Psoas muscle (tissue), 8 donors: ENCODE measurements at regions of chr1 and their contacts with region 1.

Region 1: DNA sequence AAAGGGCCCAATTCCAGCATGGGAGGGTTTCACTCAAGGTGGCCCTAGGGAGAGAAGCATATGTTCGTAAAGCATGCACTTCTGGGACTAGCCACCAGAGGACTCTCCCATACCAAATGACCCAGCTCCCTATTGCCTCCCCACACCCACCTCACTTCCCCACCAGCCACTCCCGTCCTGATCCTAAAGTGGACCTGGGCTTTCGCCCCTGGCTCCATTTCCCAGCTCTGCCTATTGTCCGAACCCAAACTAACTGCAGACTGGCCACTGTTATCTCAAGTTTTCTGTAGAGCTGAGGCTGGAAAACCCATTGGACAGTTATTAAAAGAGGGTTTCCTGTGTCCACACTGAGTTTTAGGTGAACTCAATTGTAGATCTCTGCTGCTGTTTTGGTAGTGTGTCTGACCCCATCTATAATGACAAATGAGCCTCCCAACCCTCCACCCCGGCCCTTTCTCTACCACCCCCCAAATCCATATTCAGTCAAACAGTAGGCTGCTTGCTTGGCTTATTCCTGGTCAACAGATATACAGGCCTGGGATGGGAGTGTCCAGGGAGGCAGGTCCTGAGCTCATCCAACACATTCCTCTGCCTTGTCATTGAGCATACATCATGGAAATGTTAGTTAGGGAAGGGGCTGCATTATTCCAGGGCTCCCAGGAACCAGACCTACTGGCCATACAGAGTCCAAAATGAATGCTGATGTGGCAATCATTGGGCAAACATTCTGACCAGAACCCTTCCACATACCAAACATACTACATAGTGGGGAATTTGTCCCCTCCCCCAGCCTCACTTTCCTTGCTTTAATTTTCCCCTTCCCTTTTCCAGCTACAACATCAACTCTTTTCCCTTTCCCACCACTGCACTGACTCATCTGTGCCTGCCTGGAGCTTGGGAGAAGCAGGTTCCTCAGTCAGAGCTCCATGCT is 59.2 kb downstream of the ABCA4 start:
- DNase-seq: peak; percentile 44 to 73
- ATAC-seq: peak; percentile 90 to 96 (median 92)
- H3K4me3 ChIP-seq: no peak overlapping the region
- H3K27ac ChIP-seq: no peak overlapping the region
- H3K4me1 ChIP-seq: peaks cover 8% of the 10 kb centered on the region
- H3K27me3 ChIP-seq: no peaks in the 10 kb centered on the region
- CTCF ChIP-seq: peak; percentile 88

Region 2: GRCh38 chr1:94130851-94131595 is 69.2 kb after region 1 on chr1:
- intact Hi-C with region 1: no loop called
- DNase-seq: no peak
- ATAC-seq: no peak
- H3K4me3 ChIP-seq: no peak overlapping the region
- H3K27ac ChIP-seq: no peak overlapping the region
- H3K4me1 ChIP-seq: no peaks in the 10 kb centered on the region
- H3K27me3 ChIP-seq: no peaks in the 10 kb centered on the region
- CTCF ChIP-seq: no peak

Region 3: DNA sequence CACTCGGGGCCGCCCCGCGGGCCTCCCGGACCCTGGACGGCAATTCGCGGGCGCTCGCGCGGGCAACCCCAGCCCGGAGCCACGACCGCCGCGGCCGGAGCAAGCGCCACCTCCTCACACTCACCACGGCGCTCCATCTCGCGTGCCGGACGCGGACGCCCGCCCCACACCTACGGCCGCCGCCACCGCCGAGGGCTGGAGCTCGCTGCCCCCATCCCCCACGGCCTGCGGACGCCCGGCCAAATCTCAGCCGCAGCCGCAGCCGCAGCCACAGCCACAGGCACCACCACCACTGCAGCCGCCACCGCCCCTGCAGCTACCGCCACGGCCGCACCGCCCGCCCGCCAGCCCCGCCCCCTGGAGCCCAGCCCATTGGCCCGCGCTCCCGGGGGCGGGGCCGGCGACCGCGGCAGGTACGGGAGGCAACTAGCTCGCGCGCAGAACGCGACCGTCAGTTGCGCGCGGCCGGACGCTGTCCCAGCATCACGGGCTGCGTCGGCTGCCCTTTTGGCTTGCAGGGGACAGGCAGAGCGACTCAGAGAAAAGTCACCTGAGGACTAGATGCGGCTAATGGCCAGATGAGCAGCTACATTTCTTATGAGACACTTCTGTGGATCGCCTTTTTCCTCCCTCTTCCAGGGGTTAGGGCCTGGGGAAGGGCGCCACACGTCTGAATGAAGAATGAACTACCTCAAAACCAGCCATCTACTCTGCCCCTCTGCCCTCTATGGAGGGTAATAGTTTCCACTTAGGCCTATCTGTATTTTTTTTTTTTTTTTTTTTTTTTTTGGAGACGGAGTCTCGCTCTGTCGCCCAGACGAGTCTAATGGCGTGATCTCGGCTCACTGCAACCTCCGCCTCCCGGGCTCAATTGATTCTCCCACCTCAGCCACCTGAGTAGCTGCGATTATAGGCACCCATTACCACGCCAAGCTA is 175.8 kb after region 1 on chr1 and contains the start of gene ARHGAP29:
- intact Hi-C with region 1: loop called (anchors 5 to 10 kb)
- DNase-seq: peak; percentile 82 to 92
- ATAC-seq: peak; percentile 93 to 96 (median 96)
- H3K4me3 ChIP-seq: peak within 1 kb of the TSS; percentile 84
- H3K27ac ChIP-seq: peak within 1 kb of the TSS; percentile 95
- H3K4me1 ChIP-seq: peaks cover 10% of the 10 kb centered on the region
- H3K27me3 ChIP-seq: no peaks in the 10 kb centered on the region
- CTCF ChIP-seq: peak; percentile 1
- total RNA-seq, gene ARHGAP29: 11.8 to 20.0 (median 15.7) TPM

Region 4: DNA sequence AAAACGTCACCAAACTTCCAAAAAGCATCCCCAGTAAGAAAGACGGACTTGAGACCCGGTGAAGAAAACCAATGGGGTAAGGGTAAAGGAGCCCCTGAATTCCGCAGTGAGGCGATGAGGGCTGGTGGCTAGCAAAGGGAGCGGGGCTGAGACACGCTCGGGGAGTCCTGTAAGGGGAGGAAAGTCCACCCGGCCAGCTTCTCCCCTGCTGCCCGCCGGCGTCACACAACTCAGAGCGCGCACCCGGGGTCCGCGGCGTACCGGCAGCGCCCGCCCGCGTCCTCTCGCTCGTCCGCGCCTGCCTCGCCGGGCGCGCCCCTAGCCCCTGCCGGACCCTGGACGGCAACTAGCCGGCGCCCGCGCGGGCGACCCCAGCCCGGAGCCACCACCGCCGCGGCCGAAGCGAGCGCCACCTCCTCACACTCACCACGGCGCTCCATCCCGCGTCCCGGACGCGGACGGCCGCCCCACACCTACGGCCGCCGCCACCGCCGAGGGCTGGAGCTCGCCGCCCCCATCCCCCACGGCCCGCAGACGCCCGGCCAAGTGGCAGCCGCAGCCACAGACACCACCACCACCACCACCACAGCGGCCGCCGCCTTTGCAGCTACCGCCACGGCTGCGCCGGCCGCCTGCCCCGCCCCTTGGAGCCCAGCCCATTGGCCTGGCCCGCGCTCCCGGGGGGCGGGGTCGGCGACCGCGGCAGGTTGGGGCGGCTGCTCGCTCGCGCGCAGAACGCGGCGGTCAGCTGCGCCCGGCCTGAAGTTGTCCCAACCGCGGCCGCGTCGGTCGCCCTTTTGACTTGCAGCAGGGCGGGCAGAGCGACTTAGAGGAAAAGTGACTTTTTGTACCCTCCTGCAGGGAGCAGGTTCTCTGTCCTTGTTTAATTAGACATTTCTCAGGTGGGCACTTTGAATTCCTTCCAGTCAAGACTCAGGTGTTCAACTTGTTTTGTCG is 185.6 kb after region 1 on chr1:
- intact Hi-C with region 1: loop called in 1 of 2 experiments (anchors 10 kb)
- DNase-seq: peak; percentile 83 to 91
- ATAC-seq: peak; percentile 96 to 98 (median 98)
- H3K4me3 ChIP-seq: peak overlapping the region; percentile 73
- H3K27ac ChIP-seq: peak overlapping the region; percentile 78
- H3K4me1 ChIP-seq: peaks cover 5% of the 10 kb centered on the region
- H3K27me3 ChIP-seq: no peaks in the 10 kb centered on the region
- CTCF ChIP-seq: no peak

Region 5: GRCh38 chr1:94335950-94336349 is 274.2 kb after region 1 on chr1:
- intact Hi-C with region 1: loop called (anchors 2 kb)
- DNase-seq: peak; percentile 52 to 61
- ATAC-seq: peak; percentile 89 to 99 (median 93)
- H3K4me3 ChIP-seq: no peak overlapping the region
- H3K27ac ChIP-seq: no peak overlapping the region
- H3K4me1 ChIP-seq: peaks cover 8% of the 10 kb centered on the region
- H3K27me3 ChIP-seq: no peaks in the 10 kb centered on the region
- CTCF ChIP-seq: peak; percentile 88

Region 6: DNA sequence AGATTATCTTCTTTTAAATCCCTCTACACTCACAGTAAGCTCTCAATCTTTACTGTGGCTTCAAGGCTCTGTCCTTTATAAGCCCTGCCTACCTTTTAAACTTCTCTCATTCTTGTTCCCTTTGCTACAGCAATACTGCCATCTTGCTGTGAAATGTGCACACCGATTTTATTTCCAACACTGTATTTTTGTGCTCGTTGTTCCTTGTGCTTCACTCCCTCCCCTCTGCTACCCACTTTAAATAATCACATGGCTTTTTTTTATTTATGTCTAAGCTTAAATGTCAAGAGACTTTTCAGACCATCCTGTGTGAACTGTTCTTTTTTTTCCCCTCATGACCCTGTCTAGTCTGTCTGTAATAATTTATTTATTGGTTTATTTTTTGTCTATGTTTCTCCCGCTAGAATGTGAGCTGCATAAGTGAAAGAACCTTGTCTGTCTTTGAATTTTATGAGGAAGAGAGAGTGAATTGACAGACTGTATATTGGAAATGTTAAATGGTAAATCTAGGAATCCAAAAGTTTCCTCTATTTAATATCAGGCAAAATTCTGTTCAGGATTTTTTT is 402.1 kb after region 1 on chr1:
- intact Hi-C with region 1: loop called in 1 of 2 experiments (anchors 10 kb)
- DNase-seq: no peak
- ATAC-seq: peak; percentile 56 to 90 (median 67)
- H3K4me3 ChIP-seq: no peak overlapping the region
- H3K27ac ChIP-seq: no peak overlapping the region
- H3K4me1 ChIP-seq: no peaks in the 10 kb centered on the region
- H3K27me3 ChIP-seq: no peaks in the 10 kb centered on the region
- CTCF ChIP-seq: peak; percentile 65